Common myeloid progenitor, CD34-positive (primary cell): ENCODE measurements at regions of chr1 and their contacts with region 1.

Region 1: GRCh38 chr1:92837062-92837461 is 5.2 kb downstream of the RPL5 start:
- DNase-seq: no peak
- H3K4me3 ChIP-seq: no peak overlapping the region
- H3K27ac ChIP-seq: no peak overlapping the region
- H3K4me1 ChIP-seq: peaks cover 9 to 27% (median 17%) of the 10 kb centered on the region in 4 experiments
- H3K27me3 ChIP-seq: no peaks in the 10 kb centered on the region

Region 2: GRCh38 chr1:92851729-92852128 is 14.7 kb after region 1 on chr1:
- CTCF ChIA-PET with region 1: interaction called, 13 read pairs
- POLR2A ChIA-PET with region 1: no interaction called
- DNase-seq: peak in 2 of 3 donors; percentile 20 to 32
- H3K4me3 ChIP-seq: no peak overlapping the region
- H3K27ac ChIP-seq: no peak overlapping the region
- H3K4me1 ChIP-seq: peaks cover 2 to 5% (median 4%) of the 10 kb centered on the region in 4 experiments
- H3K27me3 ChIP-seq: no peaks in the 10 kb centered on the region